Aorta (tissue), 5 donors: ENCODE measurements at regions of chr10 and their contacts with region 1.

Region 1: GRCh38 chr10:99732033-99732912 is at the starts of genes COX15 and CUTC:
- DNase-seq: peak; percentile 98 to 99
- ATAC-seq: peak; percentile 99
- H3K4me3 ChIP-seq: peak within 1 kb of the TSS; percentile 50 to 97
- H3K27ac ChIP-seq: peak within 1 kb of the TSS; percentile 7 to 78
- H3K4me1 ChIP-seq: no peaks in the 10 kb centered on the region
- H3K27me3 ChIP-seq: no peaks in the 10 kb centered on the region
- total RNA-seq, gene COX15: 16.3 to 27.2 TPM
- total RNA-seq, gene CUTC: 16.5 to 22.4 TPM

Region 2: GRCh38 chr10:99430451-99431189 is 301.7 kb before region 1 on chr10 and contains the start of gene GOT1:
- intact Hi-C with region 1: loop called in 1 of 2 experiments (anchors 5 kb)
- DNase-seq: peak; percentile 96
- ATAC-seq: peak; percentile 98
- H3K4me3 ChIP-seq: peak within 1 kb of the TSS; percentile 80 to 89
- H3K27ac ChIP-seq: peak within 1 kb of the TSS in 1 of 2 donors; percentile 43
- H3K4me1 ChIP-seq: no peaks in the 10 kb centered on the region
- H3K27me3 ChIP-seq: no peaks in the 10 kb centered on the region
- total RNA-seq, gene GOT1: 9.4 to 13.7 TPM

Region 3: GRCh38 chr10:99788598-99789256 is 56.5 kb after region 1 on chr10:
- intact Hi-C with region 1: loop called in 1 of 2 experiments (anchors 5 kb)
- DNase-seq: peak in 1 of 2 donors; percentile 62
- ATAC-seq: peak; percentile 91
- H3K4me3 ChIP-seq: no peak overlapping the region
- H3K27ac ChIP-seq: peak overlapping the region; percentile 14 to 63
- H3K4me1 ChIP-seq: no peaks in the 10 kb centered on the region
- H3K27me3 ChIP-seq: no peaks in the 10 kb centered on the region